Cardiac septum (tissue), 1 donor: ENCODE measurements at regions of chr21 and their contacts with region 1.

Region 1: GRCh38 chr21:35438643-35439404 is 389.7 kb upstream of the RUNX1 start:
- DNase-seq: no peak

Region 2: GRCh38 chr21:35840197-35840799 is 401.5 kb after region 1 on chr21:
- intact Hi-C with region 1: loop called (anchors 10 kb)
- DNase-seq: no peak